ENCODE measurements at regions of chr10 and their contacts with region 1.

Region 1: GRCh38 chr10:121823993-121824463 is 103.8 kb downstream of the ATE1 start:
- DNase-seq: peak; percentile 54
- H3K4me3 ChIP-seq: no peak overlapping the region
- H3K27ac ChIP-seq: no peak overlapping the region
- H3K4me1 ChIP-seq: no peaks in the 10 kb centered on the region
- H3K27me3 ChIP-seq: no peaks in the 10 kb centered on the region
- CTCF ChIP-seq: peak; percentile 40 to 59
- POLR2A ChIP-seq: no peak

Region 2: DNA sequence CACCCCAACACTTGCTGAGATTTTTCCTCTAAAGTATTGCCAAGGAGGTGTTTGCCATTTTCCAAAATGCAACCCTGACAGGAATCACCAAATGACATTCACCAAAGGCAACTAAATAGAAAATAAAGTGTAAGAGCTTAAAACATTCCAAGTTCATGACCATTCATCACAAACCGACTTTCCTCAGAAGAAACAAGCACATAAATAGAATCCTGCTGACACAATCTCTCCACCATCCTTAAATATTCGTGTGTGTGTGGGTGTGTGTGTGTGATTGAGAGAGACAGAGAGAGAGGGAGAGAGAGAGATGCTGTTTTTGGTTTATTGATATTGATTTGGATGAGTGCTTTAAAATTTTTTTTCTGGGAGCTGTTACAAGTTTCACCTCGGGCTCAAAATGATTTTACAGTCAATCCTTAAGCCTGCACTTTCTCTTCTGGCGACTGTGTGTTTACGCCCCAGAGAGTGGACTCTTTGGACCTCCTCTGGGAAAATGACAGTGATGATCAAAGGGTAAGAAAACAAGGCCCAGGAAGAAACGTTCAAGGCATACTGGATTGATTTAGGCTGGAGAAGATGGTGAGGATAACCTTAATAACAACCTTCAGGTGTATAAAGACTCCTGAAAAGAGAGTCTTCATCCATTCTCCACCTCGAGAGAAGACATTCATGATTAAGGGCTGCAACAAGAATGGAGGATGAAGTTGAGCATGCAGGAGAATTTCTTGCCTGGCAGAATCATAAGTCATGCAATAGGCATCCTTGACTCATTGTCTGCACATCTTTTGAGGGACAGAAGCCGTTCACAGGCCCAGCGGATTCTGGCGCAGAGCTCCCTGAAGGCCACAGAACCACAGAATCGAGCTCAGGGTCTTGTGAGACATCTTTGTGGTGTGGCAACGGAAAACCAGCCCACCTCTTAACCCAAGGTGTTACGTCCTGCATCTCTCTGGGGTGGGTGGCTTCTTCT is 121.4 kb before region 1 on chr10:
- CTCF ChIA-PET with region 1: no interaction called
- POLR2A ChIA-PET with region 1: no interaction called
- dilution Hi-C with region 1: no loop called
- intact Hi-C with region 1: no loop called
- DNase-seq: no peak
- H3K4me3 ChIP-seq: no peak overlapping the region
- H3K27ac ChIP-seq: no peak overlapping the region
- H3K4me1 ChIP-seq: no peaks in the 10 kb centered on the region
- H3K27me3 ChIP-seq: no peaks in the 10 kb centered on the region
- CTCF ChIP-seq: no peak
- POLR2A ChIP-seq: no peak

Region 3: DNA sequence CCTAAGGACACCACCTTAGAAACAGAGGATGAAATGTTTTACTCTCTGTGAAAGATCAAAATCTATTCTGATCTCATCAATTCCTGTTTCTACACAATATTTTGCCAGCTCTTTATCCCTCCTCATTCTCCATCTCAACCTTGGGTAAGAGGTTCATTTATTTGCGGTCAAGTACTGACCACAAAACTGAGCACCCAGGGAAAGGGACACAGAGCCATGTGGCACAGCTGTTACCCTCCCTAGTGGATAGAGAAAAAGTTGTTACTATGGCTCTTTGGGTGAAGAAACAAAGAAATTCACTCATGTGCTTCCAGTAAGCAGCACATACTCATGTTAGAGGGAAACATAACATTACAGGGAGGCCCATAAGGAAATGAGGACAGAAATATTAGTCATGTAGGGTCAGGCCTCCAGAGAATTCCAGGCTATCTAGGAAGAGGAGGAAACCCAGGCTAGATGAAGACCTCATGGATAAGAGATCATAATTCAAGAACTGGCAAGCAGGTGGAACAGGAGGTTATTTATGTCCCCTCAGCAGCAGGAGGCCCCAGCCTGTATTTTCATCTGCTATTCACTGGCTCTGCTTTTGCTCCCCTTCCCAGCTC is 10.7 kb before region 1 on chr10:
- CTCF ChIA-PET with region 1: interaction called, 19 read pairs
- POLR2A ChIA-PET with region 1: no interaction called
- dilution Hi-C with region 1: no loop called
- intact Hi-C with region 1: no loop called
- DNase-seq: peak; percentile 83
- H3K4me3 ChIP-seq: no peak overlapping the region
- H3K27ac ChIP-seq: peak overlapping the region; percentile 34
- H3K4me1 ChIP-seq: peaks cover 8% of the 10 kb centered on the region
- H3K27me3 ChIP-seq: no peaks in the 10 kb centered on the region
- CTCF ChIP-seq: no peak
- POLR2A ChIP-seq: no peak

Region 4: GRCh38 chr10:121835376-121835775 is 11.3 kb after region 1 on chr10:
- CTCF ChIA-PET with region 1: interaction called, 19 read pairs
- POLR2A ChIA-PET with region 1: no interaction called
- dilution Hi-C with region 1: no loop called
- intact Hi-C with region 1: no loop called
- DNase-seq: no peak
- H3K4me3 ChIP-seq: no peak overlapping the region
- H3K27ac ChIP-seq: no peak overlapping the region
- H3K4me1 ChIP-seq: no peaks in the 10 kb centered on the region
- H3K27me3 ChIP-seq: no peaks in the 10 kb centered on the region
- CTCF ChIP-seq: no peak
- POLR2A ChIP-seq: no peak